Posterior vena cava (tissue), 2 donors: ENCODE measurements at regions of chr10 and their contacts with region 1.

Region 1: DNA sequence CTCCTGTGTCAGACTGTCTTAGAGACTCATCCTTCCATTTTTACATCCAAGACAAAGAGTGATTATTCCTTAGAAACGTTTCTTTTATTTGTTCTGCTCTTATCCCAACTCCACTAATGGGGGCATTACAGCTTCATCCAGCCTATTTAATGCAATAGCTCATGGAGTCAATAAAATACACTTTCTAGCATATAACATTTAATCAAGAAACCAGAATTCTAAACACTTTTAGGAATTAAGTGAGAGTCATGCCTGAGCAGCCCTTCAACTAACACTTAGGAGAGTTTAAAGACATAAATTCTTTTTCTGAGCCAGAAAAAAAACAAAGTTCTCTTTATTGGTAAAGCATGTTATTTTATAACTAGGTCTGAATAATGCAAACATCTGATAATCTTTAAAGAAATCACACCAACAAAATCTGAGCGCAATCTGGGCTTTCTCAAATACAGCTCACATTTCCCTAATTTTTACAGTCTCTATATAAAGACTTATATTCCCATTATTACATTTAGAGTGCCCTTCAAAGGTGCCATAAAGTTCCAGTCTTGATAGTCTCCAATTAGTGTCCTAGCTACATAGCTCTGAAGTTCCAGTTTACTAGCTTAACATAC is 361.7 kb upstream of the HPS1 start:
- DNase-seq: no peak

Region 2: DNA sequence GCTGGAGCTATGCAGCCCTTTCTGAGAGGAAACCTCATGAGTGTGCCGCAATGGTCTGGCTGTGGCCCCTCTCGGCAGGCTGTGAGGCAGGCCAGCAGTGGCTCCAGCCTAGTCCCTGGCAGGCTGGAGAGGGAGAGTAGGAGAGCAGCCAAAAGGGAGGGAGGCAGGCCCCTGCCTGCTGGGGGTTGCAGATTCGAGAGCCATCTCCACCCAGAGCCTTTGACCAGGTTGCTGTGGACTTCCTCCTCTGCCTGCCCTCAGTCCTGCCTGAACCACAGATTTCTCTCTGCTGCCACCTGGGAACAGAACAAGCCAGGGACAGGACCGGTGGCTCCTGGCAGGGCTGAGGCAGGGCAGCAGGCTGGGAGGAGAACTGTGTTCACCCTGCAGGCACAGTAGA is 1950.9 kb after region 1 on chr10:
- intact Hi-C with region 1: loop called in 1 of 2 experiments (anchors 10 kb)
- DNase-seq: peak; percentile 48